Activated CD8-positive, alpha-beta memory T cell treated with anti-CD3 and anti-CD28 coated beads, Interleukin-2, amount 10 ng/mL, durations not matched to agents 7 days and 5 days (primary cell): ENCODE measurements at regions of chr5 and their contacts with region 1.

Region 1: DNA sequence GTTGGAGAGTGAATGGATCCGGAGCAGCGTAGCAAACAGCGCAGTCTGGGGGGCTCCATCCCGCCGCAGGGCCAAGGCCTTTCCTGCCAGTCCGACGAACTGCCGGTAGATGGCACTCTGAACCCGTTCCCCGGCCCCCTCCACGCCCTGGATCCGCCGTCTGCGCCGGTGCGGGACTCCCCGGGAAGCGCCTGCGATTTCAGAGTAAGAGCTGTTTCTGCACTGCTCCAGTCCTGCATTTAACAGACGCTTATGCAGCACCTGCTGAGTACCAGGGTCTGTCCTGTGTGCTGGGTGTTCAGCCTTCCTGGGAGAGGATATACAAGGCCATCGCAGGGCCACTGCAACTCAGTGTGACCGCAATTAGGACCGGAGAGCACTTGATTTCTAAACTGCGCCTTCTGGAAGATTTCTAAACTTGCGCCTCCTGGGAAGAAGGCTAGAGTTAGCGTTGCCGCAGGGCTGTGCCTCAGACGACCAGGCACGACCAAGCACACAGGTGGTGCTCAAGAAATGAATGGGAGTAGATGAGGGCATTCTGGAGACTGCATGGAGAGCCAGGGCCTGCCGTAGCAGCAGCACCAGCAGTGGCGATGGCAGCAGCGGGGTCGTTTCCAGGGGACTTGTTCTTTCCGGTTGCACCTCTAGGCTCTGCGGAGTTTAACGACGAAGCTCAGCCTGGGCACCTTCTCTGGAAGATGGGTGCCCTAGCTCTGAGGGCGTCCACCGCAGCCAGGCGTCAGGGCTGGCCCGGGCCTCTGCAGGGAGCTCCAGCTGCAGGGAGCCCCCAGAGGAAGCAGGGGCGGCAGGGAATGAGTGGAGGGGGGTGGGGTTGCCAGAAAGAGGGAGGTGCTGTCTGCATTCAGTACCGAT is 14.3 kb upstream of the TIFAB start:
- DNase-seq: peak; percentile 77
- ATAC-seq: peak; percentile 83
- H3K4me3 Mint-ChIP-seq: no peak overlapping the region
- H3K27ac Mint-ChIP-seq: no peak overlapping the region
- H3K4me1 Mint-ChIP-seq: peaks cover 3% of the 10 kb centered on the region
- H3K27me3 Mint-ChIP-seq: peaks cover 69% of the 10 kb centered on the region

Region 2: DNA sequence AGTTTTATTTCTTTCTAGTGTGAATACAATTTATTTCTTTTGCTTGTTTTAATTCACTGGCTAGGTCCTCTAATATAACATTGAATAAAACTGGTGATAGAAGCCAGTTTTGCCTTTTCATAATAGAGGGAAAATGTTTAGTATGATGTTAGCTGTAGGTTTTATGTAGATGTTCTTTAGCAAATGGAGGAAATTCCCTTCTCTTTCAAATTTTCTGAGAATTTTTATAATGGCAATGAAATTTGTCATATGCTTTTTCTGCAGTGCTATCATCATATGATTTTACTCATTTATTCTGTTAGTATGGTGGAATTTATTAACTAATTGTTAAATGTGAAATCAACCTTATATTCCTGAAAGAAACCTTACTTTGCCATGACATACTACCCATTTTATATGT is 49.3 kb before region 1 on chr5:
- CTCF ChIA-PET with region 1: no interaction called
- DNase-seq: no peak
- ATAC-seq: no peak
- H3K4me3 Mint-ChIP-seq: no peak overlapping the region
- H3K27ac Mint-ChIP-seq: no peak overlapping the region
- H3K4me1 Mint-ChIP-seq: no peaks in the 10 kb centered on the region
- H3K27me3 Mint-ChIP-seq: peaks cover 73% of the 10 kb centered on the region

Region 3: GRCh38 chr5:135478938-135479337 is 12.5 kb after region 1 on chr5:
- CTCF ChIA-PET with region 1: interaction called, 11 read pairs
- DNase-seq: no peak
- ATAC-seq: no peak
- H3K4me3 Mint-ChIP-seq: no peak overlapping the region
- H3K27ac Mint-ChIP-seq: no peak overlapping the region
- H3K4me1 Mint-ChIP-seq: no peaks in the 10 kb centered on the region
- H3K27me3 Mint-ChIP-seq: peaks cover 24% of the 10 kb centered on the region

Region 4: DNA sequence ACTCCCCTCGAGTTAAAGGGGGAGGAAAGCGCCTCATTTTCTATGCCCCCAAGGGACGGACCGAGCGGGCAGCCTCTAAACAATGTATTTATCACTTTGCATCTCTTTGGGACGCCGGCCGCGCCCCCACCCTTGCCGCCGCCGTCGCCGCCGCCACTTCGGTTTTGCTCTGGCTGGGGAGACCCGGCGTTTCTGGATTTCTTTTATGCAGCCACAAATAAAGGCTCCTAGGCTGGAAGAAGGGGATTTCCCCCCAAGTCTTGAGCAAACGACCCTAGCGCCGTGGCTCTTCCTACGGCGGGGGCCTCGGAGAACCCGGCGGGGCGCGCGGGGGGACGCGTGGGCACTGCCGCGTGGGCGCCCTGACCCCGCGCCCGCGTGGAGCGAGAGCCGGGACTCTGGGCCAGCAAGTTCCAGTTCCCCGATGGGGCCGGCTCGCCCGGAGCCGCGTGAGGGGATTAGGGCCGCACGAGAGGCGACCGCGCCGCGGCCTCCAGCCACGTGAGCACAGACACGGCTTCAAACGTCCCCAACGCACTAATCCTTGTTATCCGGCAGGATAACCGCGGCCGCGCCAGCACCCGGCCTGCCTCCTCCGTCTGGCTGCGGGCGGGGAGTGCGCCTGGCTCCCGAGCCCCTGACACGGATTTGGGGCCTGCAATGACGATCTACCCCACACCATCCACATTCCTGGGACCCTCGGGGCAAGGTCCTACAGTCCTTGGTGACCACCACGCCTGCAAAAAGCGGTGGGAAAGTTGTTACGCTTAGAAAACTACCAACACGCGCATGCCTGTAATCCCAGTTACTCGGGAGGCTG is 77.3 kb after region 1 on chr5:
- CTCF ChIA-PET with region 1: interaction called, 350 read pairs
- DNase-seq: no peak
- ATAC-seq: peak; percentile 58
- H3K4me3 Mint-ChIP-seq: peak overlapping the region; percentile 86
- H3K27ac Mint-ChIP-seq: peak overlapping the region; percentile 60
- H3K4me1 Mint-ChIP-seq: peaks cover 10% of the 10 kb centered on the region
- H3K27me3 Mint-ChIP-seq: peaks cover 89% of the 10 kb centered on the region

Region 5: GRCh38 chr5:135551593-135552447 is 85.4 kb after region 1 on chr5:
- CTCF ChIA-PET with region 1: interaction called, 350 read pairs
- DNase-seq: peak; percentile 78
- ATAC-seq: peak; percentile 85
- H3K4me3 Mint-ChIP-seq: no peak overlapping the region
- H3K27ac Mint-ChIP-seq: no peak overlapping the region
- H3K4me1 Mint-ChIP-seq: no peaks in the 10 kb centered on the region
- H3K27me3 Mint-ChIP-seq: peaks cover 63% of the 10 kb centered on the region

Region 6: DNA sequence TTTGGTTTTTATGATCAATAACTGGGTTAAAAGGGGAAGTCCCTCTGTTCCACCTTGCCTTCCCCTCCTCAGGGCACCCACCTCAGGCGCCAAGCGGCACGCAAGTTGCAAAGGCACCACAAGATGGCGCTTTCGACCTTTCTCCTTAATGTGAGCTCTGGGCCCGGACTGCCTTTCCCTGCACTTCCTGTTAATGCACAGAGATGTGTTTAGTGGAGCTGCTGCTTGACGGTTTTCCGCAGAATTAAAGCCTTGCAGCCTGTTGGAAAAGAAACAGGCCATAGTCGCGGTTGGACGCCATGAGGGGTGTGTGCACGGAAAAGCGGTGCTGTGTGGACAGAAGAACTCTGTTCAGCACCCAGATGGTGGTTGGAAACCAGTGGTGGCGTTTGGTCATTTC is 94.4 kb after region 1 on chr5:
- CTCF ChIA-PET with region 1: interaction called, 350 read pairs
- DNase-seq: peak; percentile 79
- ATAC-seq: peak; percentile 73
- H3K4me3 Mint-ChIP-seq: no peak overlapping the region
- H3K27ac Mint-ChIP-seq: no peak overlapping the region
- H3K4me1 Mint-ChIP-seq: peaks cover 4% of the 10 kb centered on the region
- H3K27me3 Mint-ChIP-seq: peaks cover 41% of the 10 kb centered on the region

Region 7: GRCh38 chr5:135565725-135566421 is 99.5 kb after region 1 on chr5:
- CTCF ChIA-PET with region 1: interaction called, 121 read pairs
- DNase-seq: peak; percentile 77
- ATAC-seq: peak; percentile 76
- H3K4me3 Mint-ChIP-seq: no peak overlapping the region
- H3K27ac Mint-ChIP-seq: no peak overlapping the region
- H3K4me1 Mint-ChIP-seq: peaks cover 1% of the 10 kb centered on the region
- H3K27me3 Mint-ChIP-seq: peaks cover 7% of the 10 kb centered on the region